ENCODE measurements at regions of chr12 and their contacts with region 1.

Region 1: GRCh38 chr12:105356471-105356870 is 26.0 kb downstream of the C12orf75 start:
- DNase-seq: no peak
- ATAC-seq: no peak
- H3K4me3 ChIP-seq: no peak overlapping the region
- H3K4me3 Mint-ChIP-seq: no peak overlapping the region
- H3K27ac ChIP-seq: no peak overlapping the region
- H3K27ac Mint-ChIP-seq: no peak overlapping the region
- H3K4me1 ChIP-seq: peaks cover 46 to 50% of the 10 kb centered on the region in 2 donors
- H3K4me1 Mint-ChIP-seq: peaks cover 54% of the 10 kb centered on the region
- H3K27me3 ChIP-seq: no peaks in the 10 kb centered on the region
- H3K27me3 Mint-ChIP-seq: no peaks in the 10 kb centered on the region
- CTCF ChIP-seq: no peak

Region 2: DNA sequence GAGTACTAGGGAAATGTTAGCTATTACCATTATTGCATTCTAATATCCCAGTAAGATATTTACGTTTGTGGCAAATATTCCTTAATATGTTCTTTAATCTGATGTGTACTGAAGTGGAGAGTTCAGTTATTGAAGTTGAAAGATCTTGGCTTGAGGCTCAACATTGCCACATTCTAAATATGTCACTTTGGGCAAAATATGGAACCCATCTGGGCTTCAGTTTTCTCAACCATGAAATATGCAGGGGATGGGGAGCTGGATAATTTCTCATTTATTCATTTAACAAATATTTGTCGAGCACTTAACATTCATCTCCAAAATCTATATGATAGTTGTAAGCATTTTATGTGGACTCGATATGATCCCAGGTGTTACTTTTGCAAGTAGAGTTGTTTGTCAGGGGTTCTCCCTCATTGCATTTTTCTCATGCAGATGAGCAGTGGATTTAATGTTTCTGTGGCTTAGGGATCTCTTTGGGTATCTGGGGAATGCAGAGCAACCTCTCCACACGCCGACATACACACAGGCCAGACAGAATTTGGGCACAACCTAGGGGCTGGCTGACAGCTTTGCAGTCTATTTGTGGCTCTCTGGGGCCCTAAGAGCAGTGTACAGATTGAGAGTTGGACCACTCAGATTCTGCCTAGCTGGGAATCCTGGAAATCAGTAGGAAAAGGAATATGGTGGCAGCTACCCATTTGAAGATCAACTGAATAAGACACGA is 93.8 kb before region 1 on chr12:
- CTCF ChIA-PET with region 1: no interaction called
- POLR2A ChIA-PET with region 1: no interaction called
- intact Hi-C with region 1: no loop called
- DNase-seq: no peak
- ATAC-seq: no peak
- H3K4me3 ChIP-seq: no peak overlapping the region
- H3K4me3 Mint-ChIP-seq: no peak overlapping the region
- H3K27ac ChIP-seq: no peak overlapping the region
- H3K27ac Mint-ChIP-seq: no peak overlapping the region
- H3K4me1 ChIP-seq: peaks cover 0 to 10% of the 10 kb centered on the region in 2 donors
- H3K4me1 Mint-ChIP-seq: peaks cover 15% of the 10 kb centered on the region
- H3K27me3 ChIP-seq: no peaks in the 10 kb centered on the region
- H3K27me3 Mint-ChIP-seq: peaks cover 25% of the 10 kb centered on the region
- CTCF ChIP-seq: no peak

Region 3: GRCh38 chr12:105369014-105369413 is 12.5 kb after region 1 on chr12:
- CTCF ChIA-PET with region 1: no interaction called
- POLR2A ChIA-PET with region 1: interaction called, 12 read pairs
- intact Hi-C with region 1: no loop called
- DNase-seq: no peak
- ATAC-seq: no peak
- H3K4me3 ChIP-seq: no peak overlapping the region
- H3K4me3 Mint-ChIP-seq: no peak overlapping the region
- H3K27ac ChIP-seq: no peak overlapping the region
- H3K27ac Mint-ChIP-seq: no peak overlapping the region
- H3K4me1 ChIP-seq: no peaks in the 10 kb centered on the region
- H3K4me1 Mint-ChIP-seq: peaks cover 4% of the 10 kb centered on the region
- H3K27me3 ChIP-seq: no peaks in the 10 kb centered on the region
- H3K27me3 Mint-ChIP-seq: no peaks in the 10 kb centered on the region
- CTCF ChIP-seq: no peak

Region 4: DNA sequence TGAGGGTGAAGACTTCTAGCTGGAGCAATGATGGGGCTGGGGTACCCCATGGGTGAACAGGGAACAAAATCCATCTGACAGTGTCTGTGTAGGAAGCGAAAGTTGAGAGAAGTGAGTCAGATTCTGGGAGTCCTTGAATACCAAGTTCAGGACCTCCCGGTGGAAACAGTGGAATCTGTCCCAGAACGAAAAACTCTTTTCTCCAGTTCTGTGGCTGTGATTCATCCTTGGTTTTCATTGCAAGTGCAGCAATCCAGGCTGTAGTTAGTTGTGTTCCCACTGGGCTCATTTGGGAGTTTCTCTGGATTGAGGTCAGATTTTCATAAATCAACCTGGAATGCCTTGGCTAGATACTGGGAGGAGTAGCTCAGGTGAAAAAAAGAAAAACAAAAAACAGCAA is 94.7 kb after region 1 on chr12:
- CTCF ChIA-PET with region 1: no interaction called
- POLR2A ChIA-PET with region 1: no interaction called
- intact Hi-C with region 1: no loop called
- DNase-seq: no peak
- ATAC-seq: no peak
- H3K4me3 ChIP-seq: no peak overlapping the region
- H3K4me3 Mint-ChIP-seq: no peak overlapping the region
- H3K27ac ChIP-seq: no peak overlapping the region
- H3K27ac Mint-ChIP-seq: no peak overlapping the region
- H3K4me1 ChIP-seq: no peaks in the 10 kb centered on the region
- H3K4me1 Mint-ChIP-seq: no peaks in the 10 kb centered on the region
- H3K27me3 ChIP-seq: no peaks in the 10 kb centered on the region
- H3K27me3 Mint-ChIP-seq: peaks cover 33% of the 10 kb centered on the region
- CTCF ChIP-seq: no peak

Measured in B cell (primary cell).